ENCODE measurements at regions of chr6 and their contacts with region 1.

Region 1: DNA sequence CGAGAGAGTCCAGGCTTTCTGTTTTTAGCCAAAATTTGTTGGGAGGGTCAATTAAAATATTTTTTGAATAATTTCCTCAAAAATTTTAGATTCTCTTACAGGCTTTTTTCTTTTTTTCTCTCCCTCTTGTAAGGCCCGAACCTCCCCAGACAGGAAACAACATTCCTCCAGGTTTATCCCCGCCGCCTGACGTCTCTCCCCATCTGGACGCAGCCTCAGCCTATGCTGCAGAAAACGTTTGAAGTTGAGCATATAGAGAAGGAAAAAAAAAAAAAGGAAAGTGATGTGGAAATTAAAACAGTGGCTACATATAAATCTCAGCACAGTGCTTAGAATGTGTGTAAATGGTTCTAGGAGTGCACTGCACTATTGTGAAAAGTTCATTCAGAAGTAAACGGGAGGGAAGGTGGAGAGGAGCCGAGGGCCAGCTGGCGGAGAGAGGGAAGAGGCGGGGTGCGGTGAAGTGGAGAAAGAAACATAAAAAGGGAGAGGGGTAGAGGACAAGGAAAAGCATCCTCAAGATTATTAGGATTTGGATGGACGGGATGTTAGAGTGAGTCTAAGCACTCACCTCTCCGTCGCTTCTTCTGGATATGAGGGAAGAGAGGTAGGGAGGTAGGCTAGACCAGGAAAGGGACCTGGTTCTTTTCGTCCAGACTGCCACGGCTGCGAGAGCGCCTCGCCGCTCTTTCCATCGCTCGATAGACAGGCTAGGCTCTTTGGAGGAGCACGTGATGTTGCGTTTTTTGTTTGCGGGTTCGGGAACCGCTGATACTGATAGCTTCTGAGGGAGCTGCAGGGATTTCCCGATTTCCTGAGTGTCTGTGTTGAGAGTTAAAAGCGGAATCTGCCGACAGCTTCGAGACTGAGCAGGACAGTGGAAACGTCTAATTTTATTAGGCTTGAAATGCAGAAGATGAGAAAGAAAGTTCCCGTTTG is 98.7 kb downstream of the TRIM27 start:
- DNase-seq: no peak
- ATAC-seq: no peak
- H3K4me3 Mint-ChIP-seq: no peak overlapping the region
- H3K27ac Mint-ChIP-seq: no peak overlapping the region
- H3K4me1 Mint-ChIP-seq: peaks cover 9% of the 10 kb centered on the region
- H3K27me3 Mint-ChIP-seq: peaks cover 66% of the 10 kb centered on the region
- CTCF ChIP-seq: no peak

Region 2: DNA sequence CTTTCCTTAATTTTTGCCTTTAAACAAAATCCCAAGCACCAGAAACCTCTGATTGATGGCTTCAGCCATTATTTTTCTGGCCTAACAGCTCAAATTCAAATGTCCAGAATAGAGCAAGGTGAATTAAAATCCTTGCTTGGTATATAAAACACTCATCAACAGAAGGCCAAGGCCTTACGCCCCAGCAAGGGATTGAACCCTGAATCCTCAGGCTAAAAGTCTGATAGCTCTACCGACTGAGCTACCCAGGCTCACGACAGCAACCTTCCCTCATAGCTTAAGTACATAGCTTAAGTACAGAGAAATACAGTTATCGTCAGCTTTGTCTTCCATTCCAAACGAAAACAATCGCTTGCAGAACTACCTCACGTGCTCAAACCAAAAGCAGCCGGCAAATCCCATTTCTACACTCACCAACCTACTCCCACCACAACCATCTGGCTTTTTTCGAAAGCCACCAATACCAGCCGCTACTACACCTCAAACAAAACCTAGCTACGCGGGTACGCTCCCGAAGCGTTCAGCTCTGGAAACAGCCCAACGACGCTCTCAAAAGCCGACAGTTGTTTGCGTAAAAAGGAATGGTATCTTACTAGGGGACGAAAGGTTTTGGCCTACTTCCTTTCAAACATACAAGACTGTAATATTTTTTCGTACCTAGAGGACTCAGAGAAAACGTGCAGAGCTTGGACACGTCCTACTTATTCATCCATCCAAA is 131.9 kb before region 1 on chr6:
- CTCF ChIA-PET with region 1: no interaction called
- POLR2A ChIA-PET with region 1: no interaction called
- intact Hi-C with region 1: loop called (anchors 5 kb)
- DNase-seq: no peak
- ATAC-seq: no peak
- H3K4me3 Mint-ChIP-seq: no peak overlapping the region
- H3K27ac Mint-ChIP-seq: no peak overlapping the region
- H3K4me1 Mint-ChIP-seq: no peaks in the 10 kb centered on the region
- H3K27me3 Mint-ChIP-seq: peaks cover 76% of the 10 kb centered on the region
- CTCF ChIP-seq: no peak

Region 3: GRCh38 chr6:29045075-29045474 is 220.0 kb after region 1 on chr6 and contains the start of gene OR2W1:
- CTCF ChIA-PET with region 1: no interaction called
- POLR2A ChIA-PET with region 1: no interaction called
- intact Hi-C with region 1: no loop called
- DNase-seq: no peak
- ATAC-seq: no peak
- H3K4me3 Mint-ChIP-seq: no peak within 1 kb of the TSS
- H3K27ac Mint-ChIP-seq: no peak within 1 kb of the TSS
- H3K4me1 Mint-ChIP-seq: no peaks in the 10 kb centered on the region
- H3K27me3 Mint-ChIP-seq: peaks cover 31% of the 10 kb centered on the region
- CTCF ChIP-seq: no peak
- total RNA-seq, gene OR2W1: not detected in 2 replicates

Region 4: GRCh38 chr6:30326526-30327260 is 1501.6 kb after region 1 on chr6 and contains the start of gene TRIM39:
- CTCF ChIA-PET with region 1: no interaction called
- POLR2A ChIA-PET with region 1: no interaction called
- intact Hi-C with region 1: no loop called
- DNase-seq: peak; percentile 90
- ATAC-seq: peak; percentile 68
- H3K4me3 Mint-ChIP-seq: peak within 1 kb of the TSS; percentile 96
- H3K27ac Mint-ChIP-seq: peak within 1 kb of the TSS; percentile 99
- H3K4me1 Mint-ChIP-seq: peaks cover 57% of the 10 kb centered on the region
- H3K27me3 Mint-ChIP-seq: no peaks in the 10 kb centered on the region
- CTCF ChIP-seq: no peak
- total RNA-seq, gene TRIM39: 21.6 and 22.0 TPM in 2 replicates